ENCODE measurements at regions of chr14 and their contacts with region 1.

Region 1: GRCh38 chr14:60561845-60562746 is 53.1 kb downstream of the SIX6 start:
- DNase-seq: peak; percentile 10
- ATAC-seq: no peak
- H3K4me3 ChIP-seq: no peak overlapping the region
- H3K4me3 Mint-ChIP-seq: no peak overlapping the region
- H3K27ac ChIP-seq: no peak overlapping the region
- H3K27ac Mint-ChIP-seq: no peak overlapping the region
- H3K4me1 ChIP-seq: no peaks in the 10 kb centered on the region
- H3K4me1 Mint-ChIP-seq: peaks cover 3% of the 10 kb centered on the region
- H3K27me3 ChIP-seq: no peaks in the 10 kb centered on the region
- H3K27me3 Mint-ChIP-seq: peaks cover 8% of the 10 kb centered on the region
- CTCF ChIP-seq: peak; percentile 33

Region 2: DNA sequence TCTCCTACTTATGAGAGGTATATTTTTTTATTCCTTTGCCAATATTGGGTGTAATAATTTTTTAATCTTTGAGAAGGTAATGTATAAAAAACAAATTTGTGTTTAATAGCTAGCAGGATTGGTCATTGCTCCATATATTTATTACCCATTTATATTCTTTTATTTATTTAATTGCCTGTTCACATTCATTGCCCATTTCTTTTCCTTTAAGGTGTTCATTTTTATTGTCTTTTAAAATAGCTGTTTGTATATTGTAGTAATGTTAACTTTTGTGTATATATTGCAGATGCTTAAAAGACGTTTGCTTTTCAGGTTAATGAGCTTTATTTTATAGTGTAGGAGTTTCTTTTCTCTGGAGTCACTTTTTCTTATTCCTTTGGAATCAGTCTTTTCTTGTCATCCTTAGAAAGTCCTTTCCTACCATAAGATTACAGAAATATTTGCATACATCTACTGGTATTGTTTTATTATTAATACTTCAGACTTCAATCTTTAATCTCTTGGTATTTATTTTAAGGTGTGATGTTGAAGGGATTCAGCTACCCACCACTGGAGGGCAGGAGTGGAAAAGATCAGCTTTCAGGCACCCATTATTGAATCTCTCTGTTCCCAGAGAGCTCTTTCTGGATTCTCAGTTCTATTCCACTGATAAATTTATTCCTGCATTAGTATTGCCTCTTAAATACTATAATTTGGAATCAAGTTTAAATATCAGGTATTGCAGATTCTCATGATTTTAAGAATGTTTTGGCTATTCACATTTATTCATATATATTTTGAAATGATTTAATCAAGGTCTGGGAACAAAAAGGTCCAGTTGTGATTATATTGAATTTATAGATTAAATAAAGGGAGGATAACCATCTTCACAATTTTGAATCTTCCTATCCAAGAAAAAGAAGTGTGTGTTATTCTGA is 295.8 kb before region 1 on chr14:
- CTCF ChIA-PET with region 1: no interaction called
- POLR2A ChIA-PET with region 1: no interaction called
- intact Hi-C with region 1: loop called (anchors 2 kb)
- DNase-seq: peak; percentile 35
- ATAC-seq: peak; percentile 28
- H3K4me3 ChIP-seq: no peak overlapping the region
- H3K4me3 Mint-ChIP-seq: no peak overlapping the region
- H3K27ac ChIP-seq: no peak overlapping the region
- H3K27ac Mint-ChIP-seq: no peak overlapping the region
- H3K4me1 ChIP-seq: no peaks in the 10 kb centered on the region
- H3K4me1 Mint-ChIP-seq: peaks cover 14% of the 10 kb centered on the region
- H3K27me3 ChIP-seq: no peaks in the 10 kb centered on the region
- H3K27me3 Mint-ChIP-seq: no peaks in the 10 kb centered on the region
- CTCF ChIP-seq: peak; percentile 78

Region 3: DNA sequence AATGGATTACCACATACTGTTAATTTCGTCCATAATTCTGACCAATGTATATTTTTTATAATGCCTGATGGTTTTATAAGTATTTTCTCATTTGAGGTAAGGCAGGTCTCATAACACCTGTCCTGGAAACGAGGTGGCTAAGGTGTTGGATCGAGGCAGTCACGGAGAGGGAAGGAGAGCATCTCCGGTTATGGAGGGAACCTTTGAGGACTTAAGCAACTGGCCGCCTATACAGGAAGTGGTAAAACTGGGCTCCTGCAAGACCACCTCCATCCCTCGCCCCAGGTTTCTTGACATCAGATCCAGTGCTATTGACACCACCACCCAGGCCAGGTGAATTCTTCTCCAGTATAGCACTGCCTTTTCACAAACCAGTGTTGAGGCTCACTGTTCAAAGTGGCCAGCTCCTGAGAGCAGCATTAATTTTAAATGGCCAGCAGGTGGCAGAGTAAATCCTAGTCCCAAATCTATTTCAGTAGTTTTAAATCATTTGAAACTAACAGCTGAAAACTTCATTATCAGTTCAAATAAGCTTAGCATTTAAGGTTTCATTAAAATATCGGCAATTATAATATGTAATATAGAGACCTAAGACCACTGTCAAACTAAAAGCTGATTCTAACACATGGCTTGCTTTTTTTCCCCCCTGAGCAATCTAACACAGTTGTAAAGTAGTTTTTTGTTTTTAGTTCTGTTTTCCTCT is 212.3 kb before region 1 on chr14:
- CTCF ChIA-PET with region 1: interaction called, 9 read pairs
- POLR2A ChIA-PET with region 1: no interaction called
- intact Hi-C with region 1: loop called (anchors 5 kb)
- DNase-seq: peak; percentile 55
- ATAC-seq: peak; percentile 36
- H3K4me3 ChIP-seq: no peak overlapping the region
- H3K4me3 Mint-ChIP-seq: no peak overlapping the region
- H3K27ac ChIP-seq: no peak overlapping the region
- H3K27ac Mint-ChIP-seq: no peak overlapping the region
- H3K4me1 ChIP-seq: no peaks in the 10 kb centered on the region
- H3K4me1 Mint-ChIP-seq: no peaks in the 10 kb centered on the region
- H3K27me3 ChIP-seq: peaks cover 0 to 13% (median 2%) of the 10 kb centered on the region in 4 experiments
- H3K27me3 Mint-ChIP-seq: peaks cover 9% of the 10 kb centered on the region
- CTCF ChIP-seq: peak; percentile 75

Region 4: GRCh38 chr14:61308198-61308597 is 746.1 kb after region 1 on chr14:
- CTCF ChIA-PET with region 1: no interaction called
- POLR2A ChIA-PET with region 1: no interaction called
- intact Hi-C with region 1: no loop called
- DNase-seq: no peak
- ATAC-seq: no peak
- H3K4me3 ChIP-seq: no peak overlapping the region
- H3K4me3 Mint-ChIP-seq: no peak overlapping the region
- H3K27ac ChIP-seq: no peak overlapping the region
- H3K27ac Mint-ChIP-seq: no peak overlapping the region
- H3K4me1 ChIP-seq: no peaks in the 10 kb centered on the region
- H3K4me1 Mint-ChIP-seq: no peaks in the 10 kb centered on the region
- H3K27me3 ChIP-seq: no peaks in the 10 kb centered on the region
- H3K27me3 Mint-ChIP-seq: no peaks in the 10 kb centered on the region
- CTCF ChIP-seq: no peak

Measured in B cell (primary cell).